Ascending aorta (tissue), 2 donors: ENCODE measurements at regions of chr5 and their contacts with region 1.

Region 1: GRCh38 chr5:102289251-102289899 is 6.7 kb downstream of the SLCO4C1 start:
- DNase-seq: no peak
- H3K4me3 ChIP-seq: no peak overlapping the region
- H3K27ac ChIP-seq: no peak overlapping the region
- H3K4me1 ChIP-seq: no peaks in the 10 kb centered on the region
- H3K27me3 ChIP-seq: no peaks in the 10 kb centered on the region
- CTCF ChIP-seq: no peak

Region 2: GRCh38 chr5:102271759-102272158 is 17.6 kb before region 1 on chr5:
- intact Hi-C with region 1: loop called (anchors 1 kb)
- DNase-seq: no peak
- H3K4me3 ChIP-seq: no peak overlapping the region
- H3K27ac ChIP-seq: no peak overlapping the region
- H3K4me1 ChIP-seq: no peaks in the 10 kb centered on the region
- H3K27me3 ChIP-seq: no peaks in the 10 kb centered on the region
- CTCF ChIP-seq: no peak

Region 3: DNA sequence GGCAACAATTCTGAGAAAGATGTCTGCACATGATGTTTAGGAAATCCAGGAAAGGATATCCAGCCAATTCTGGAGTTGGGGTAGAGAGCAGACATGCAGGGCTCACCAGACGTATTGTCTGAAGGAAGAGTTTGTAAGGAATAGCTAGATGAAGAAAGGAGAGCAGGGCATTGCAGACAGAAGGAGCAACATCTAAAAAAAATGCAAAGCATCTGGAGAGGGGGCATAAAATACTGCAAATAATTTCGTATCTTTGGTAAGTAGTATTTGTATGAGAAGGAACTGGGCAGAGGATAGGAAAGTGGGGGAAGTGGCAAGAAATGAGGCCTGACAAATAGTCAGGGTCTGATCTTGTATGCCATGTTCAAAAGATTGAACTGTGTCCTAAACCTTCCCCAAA is 1044.0 kb after region 1 on chr5:
- intact Hi-C with region 1: no loop called
- DNase-seq: no peak
- H3K4me3 ChIP-seq: no peak overlapping the region
- H3K27ac ChIP-seq: no peak overlapping the region
- H3K4me1 ChIP-seq: no peaks in the 10 kb centered on the region
- H3K27me3 ChIP-seq: no peaks in the 10 kb centered on the region
- CTCF ChIP-seq: no peak